ENCODE measurements at regions of chrX and their contacts with region 1.

Region 1: DNA sequence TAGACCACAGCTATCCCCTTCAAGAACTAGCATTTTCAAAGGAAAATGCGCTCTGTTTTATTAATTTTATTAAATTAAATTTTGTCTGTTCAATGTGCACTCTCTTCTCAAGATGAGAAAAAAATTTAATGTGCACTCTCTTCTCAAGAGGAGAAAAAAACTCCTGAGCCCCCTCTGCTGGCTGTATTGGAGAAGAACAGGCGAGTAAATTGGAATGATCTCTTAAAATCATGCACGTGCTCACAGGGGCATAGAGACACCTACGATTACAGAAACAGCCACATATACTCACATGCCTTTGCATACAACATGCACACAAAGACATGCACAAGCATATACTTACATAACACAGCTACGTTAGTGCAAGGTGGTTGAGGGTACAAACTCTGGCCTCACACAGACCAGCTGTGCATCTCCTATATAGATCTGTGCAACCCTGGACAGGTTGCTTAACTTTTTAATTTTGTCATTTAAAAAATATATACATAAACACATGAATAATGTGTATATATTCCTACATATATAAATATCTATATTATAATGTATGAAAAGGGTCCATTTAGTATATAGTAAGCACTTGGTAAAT is 176.2 kb upstream of the CXorf66 start:
- DNase-seq: peak; percentile 17
- H3K4me3 ChIP-seq: no peak overlapping the region
- H3K27ac ChIP-seq: no peak overlapping the region
- H3K4me1 ChIP-seq: no peaks in the 10 kb centered on the region
- H3K27me3 ChIP-seq: no peaks in the 10 kb centered on the region
- CTCF ChIP-seq: peak in 4 of 5 experiments; percentile 33 to 60 (median 45)
- EP300 ChIP-seq: no peak
- POLR2A ChIP-seq: no peak

Region 2: GRCh38 chrX:140057001-140057411 is 84.5 kb before region 1 on chrX:
- in situ Hi-C with region 1: no loop called
- intact Hi-C with region 1: loop called (anchors 10 kb)
- DNase-seq: peak; percentile 67
- H3K4me3 ChIP-seq: no peak overlapping the region
- H3K27ac ChIP-seq: no peak overlapping the region
- H3K4me1 ChIP-seq: no peaks in the 10 kb centered on the region
- H3K27me3 ChIP-seq: no peaks in the 10 kb centered on the region
- CTCF ChIP-seq: peak; percentile 46 to 78 (median 61)
- EP300 ChIP-seq: no peak
- POLR2A ChIP-seq: no peak

Region 3: DNA sequence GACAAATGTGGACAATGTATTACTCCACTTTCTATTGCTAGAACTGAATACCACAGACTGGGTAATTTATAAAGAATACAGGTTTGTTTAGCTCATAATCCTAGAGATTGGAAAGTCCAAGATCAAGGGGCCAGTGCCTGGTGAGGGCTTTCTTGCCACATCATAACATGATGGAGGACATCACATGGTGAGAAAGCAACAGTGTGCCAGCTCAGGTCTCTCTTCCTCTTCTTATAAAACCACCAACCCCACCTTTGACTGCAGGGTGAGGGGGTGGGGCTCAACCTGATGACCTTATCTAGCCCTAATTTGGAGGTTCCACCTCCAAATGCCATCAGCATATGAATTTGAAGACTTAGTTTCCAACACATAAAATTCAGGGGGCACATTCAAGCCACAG is 70.5 kb before region 1 on chrX:
- in situ Hi-C with region 1: loop called in 1 of 4 experiments (anchors 5 kb)
- intact Hi-C with region 1: loop called (anchors 2 kb)
- DNase-seq: no peak
- H3K4me3 ChIP-seq: no peak overlapping the region
- H3K27ac ChIP-seq: no peak overlapping the region
- H3K4me1 ChIP-seq: no peaks in the 10 kb centered on the region
- H3K27me3 ChIP-seq: no peaks in the 10 kb centered on the region
- CTCF ChIP-seq: no peak
- EP300 ChIP-seq: no peak
- POLR2A ChIP-seq: no peak

Region 4: GRCh38 chrX:140548985-140549384 is 407.4 kb after region 1 on chrX:
- in situ Hi-C with region 1: no loop called
- intact Hi-C with region 1: no loop called
- DNase-seq: no peak
- H3K4me3 ChIP-seq: no peak overlapping the region
- H3K27ac ChIP-seq: no peak overlapping the region
- H3K4me1 ChIP-seq: no peaks in the 10 kb centered on the region
- H3K27me3 ChIP-seq: no peaks in the 10 kb centered on the region
- CTCF ChIP-seq: no peak
- EP300 ChIP-seq: no peak
- POLR2A ChIP-seq: no peak